A673 (cell line): ENCODE measurements at regions of chr2 and their contacts with region 1.

Region 1: GRCh38 chr2:14716319-14716718 is 83.8 kb downstream of the LRATD1 start:
- DNase-seq: no peak
- H3K4me3 ChIP-seq: no peak overlapping the region
- H3K27ac ChIP-seq: no peak overlapping the region
- H3K4me1 ChIP-seq: no peaks in the 10 kb centered on the region
- H3K27me3 ChIP-seq: peaks cover 2% of the 10 kb centered on the region
- CTCF ChIP-seq: no peak

Region 2: GRCh38 chr2:14927041-14927452 is 210.7 kb after region 1 on chr2:
- CTCF ChIA-PET with region 1: no interaction called
- POLR2A ChIA-PET with region 1: no interaction called
- intact Hi-C with region 1: loop called (anchors 5 kb)
- DNase-seq: no peak
- H3K4me3 ChIP-seq: no peak overlapping the region
- H3K27ac ChIP-seq: no peak overlapping the region
- H3K4me1 ChIP-seq: no peaks in the 10 kb centered on the region
- H3K27me3 ChIP-seq: peaks cover 35% of the 10 kb centered on the region
- CTCF ChIP-seq: no peak